CD4-positive, alpha-beta memory T cell (primary cell): ENCODE measurements at regions of chr5 and their contacts with region 1.

Region 1: GRCh38 chr5:134132372-134133034 is 18.0 kb downstream of the TCF7 start:
- DNase-seq: peak; percentile 86 to 97 (median 88)
- H3K4me3 ChIP-seq: peak overlapping the region; percentile 43 to 68
- H3K4me3 Mint-ChIP-seq: peak overlapping the region; percentile 86 to 99 (median 96)
- H3K27ac ChIP-seq: peak overlapping the region; percentile 97
- H3K27ac Mint-ChIP-seq: peak overlapping the region; percentile 95 to 99 (median 98)
- H3K4me1 ChIP-seq: peaks cover 100% of the 10 kb centered on the region
- H3K4me1 Mint-ChIP-seq: peaks cover 65 to 100% (median 85%) of the 10 kb centered on the region in 4 donors
- H3K27me3 ChIP-seq: no peaks in the 10 kb centered on the region
- H3K27me3 Mint-ChIP-seq: no peaks in the 10 kb centered on the region

Region 2: GRCh38 chr5:134119720-134120119 is 12.8 kb before region 1 on chr5:
- CTCF ChIA-PET with region 1: no interaction called
- POLR2A ChIA-PET with region 1: no interaction called
- intact Hi-C with region 1: loop called (anchors 1 kb)
- DNase-seq: no peak
- H3K4me3 ChIP-seq: peak overlapping the region; percentile 82 to 85
- H3K4me3 Mint-ChIP-seq: peak overlapping the region; percentile 86 to 99 (median 96)
- H3K27ac ChIP-seq: peak overlapping the region; percentile 97
- H3K27ac Mint-ChIP-seq: peak overlapping the region; percentile 89 to 98 (median 96)
- H3K4me1 ChIP-seq: peaks cover 77% of the 10 kb centered on the region
- H3K4me1 Mint-ChIP-seq: peaks cover 35 to 90% (median 53%) of the 10 kb centered on the region in 4 donors
- H3K27me3 ChIP-seq: no peaks in the 10 kb centered on the region
- H3K27me3 Mint-ChIP-seq: no peaks in the 10 kb centered on the region